ENCODE measurements at regions of chr1 and their contacts with region 1.

Region 1: DNA sequence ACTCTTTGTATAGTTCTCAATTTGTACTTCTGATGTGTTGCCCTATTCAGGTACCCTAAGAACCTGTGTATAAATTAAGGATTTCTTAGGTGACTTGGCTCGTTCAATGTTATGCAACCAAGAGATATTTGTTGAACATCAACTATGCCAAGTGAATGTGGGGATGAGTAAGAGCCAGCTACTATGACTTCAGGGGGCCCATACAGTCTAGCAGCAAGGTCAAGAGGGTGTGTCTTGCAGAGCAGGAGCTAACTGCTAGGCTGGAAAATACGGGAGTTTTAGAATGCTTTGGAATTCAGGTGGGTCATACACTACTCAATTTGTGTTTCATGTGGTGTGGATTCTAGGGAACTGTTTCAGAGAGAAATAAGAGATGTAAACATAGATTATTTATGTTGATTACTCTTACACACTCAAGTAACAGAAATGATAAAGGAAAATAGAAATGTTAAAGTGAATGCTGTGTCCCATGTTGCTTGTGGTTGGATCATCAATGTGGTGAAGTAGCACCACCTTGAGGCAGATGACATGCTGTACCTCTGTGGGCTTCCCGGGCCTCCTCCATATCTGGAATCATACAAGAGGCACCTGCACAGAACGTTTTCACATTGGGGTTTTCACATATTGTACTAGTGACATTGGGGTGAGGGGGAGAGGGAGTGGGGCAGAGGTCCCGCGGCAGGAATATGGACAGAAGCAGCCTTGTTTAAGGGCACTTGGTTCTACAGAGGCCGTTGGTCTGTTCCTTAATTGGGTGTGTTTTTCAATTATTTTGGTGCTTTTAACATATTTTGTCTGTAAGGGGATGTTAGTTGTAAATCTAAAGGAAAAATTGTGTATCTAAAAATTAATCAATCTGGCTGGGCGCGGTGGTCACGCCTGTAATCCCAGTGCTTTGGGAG is 12.4 kb downstream of the ARPC5 start:
- DNase-seq: peak; percentile 65 to 70
- H3K4me3 ChIP-seq: no peak overlapping the region
- H3K4me3 Mint-ChIP-seq: no peak overlapping the region
- H3K27ac Mint-ChIP-seq: no peak overlapping the region
- H3K4me1 ChIP-seq: peaks cover 19% of the 10 kb centered on the region
- H3K4me1 Mint-ChIP-seq: peaks cover 9% of the 10 kb centered on the region
- H3K27me3 ChIP-seq: no peaks in the 10 kb centered on the region
- H3K27me3 Mint-ChIP-seq: no peaks in the 10 kb centered on the region
- CTCF ChIP-seq: peak; percentile 71 to 78

Region 2: GRCh38 chr1:183551904-183552303 is 71.2 kb before region 1 on chr1:
- CTCF ChIA-PET with region 1: no interaction called
- POLR2A ChIA-PET with region 1: no interaction called
- intact Hi-C with region 1: loop called (anchors 2 kb)
- DNase-seq: no peak
- H3K4me3 ChIP-seq: no peak overlapping the region
- H3K4me3 Mint-ChIP-seq: no peak overlapping the region
- H3K27ac Mint-ChIP-seq: no peak overlapping the region
- H3K4me1 ChIP-seq: no peaks in the 10 kb centered on the region; the same call in 1 of the 2 replicates
- H3K4me1 Mint-ChIP-seq: peaks cover 17% of the 10 kb centered on the region
- H3K27me3 ChIP-seq: no peaks in the 10 kb centered on the region
- H3K27me3 Mint-ChIP-seq: no peaks in the 10 kb centered on the region
- CTCF ChIP-seq: no peak

Region 3: DNA sequence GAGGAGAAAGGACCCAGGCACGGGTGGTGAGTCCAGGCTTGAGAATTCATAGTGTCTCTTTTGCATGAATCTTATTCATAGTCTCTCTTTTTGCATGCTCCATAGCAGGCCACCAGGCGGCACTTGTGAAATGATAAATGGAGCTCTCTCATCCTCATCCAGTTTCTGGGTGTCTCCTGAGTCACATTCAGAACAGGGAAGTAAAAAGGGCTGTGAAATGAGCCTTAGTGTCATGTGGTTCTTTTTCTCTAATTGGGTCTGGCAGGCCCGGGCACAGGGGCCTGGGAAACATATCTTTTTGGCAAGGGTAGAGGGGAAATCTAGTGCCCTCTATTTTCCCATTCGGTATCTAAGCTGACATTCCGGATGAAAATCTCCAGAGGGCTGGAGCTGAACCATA is 13.8 kb before region 1 on chr1:
- CTCF ChIA-PET with region 1: interaction called, 5 read pairs
- POLR2A ChIA-PET with region 1: no interaction called
- intact Hi-C with region 1: loop called (anchors 1 kb)
- DNase-seq: peak; percentile 50 to 59
- H3K4me3 ChIP-seq: no peak overlapping the region
- H3K4me3 Mint-ChIP-seq: no peak overlapping the region
- H3K27ac Mint-ChIP-seq: peak overlapping the region; percentile 49
- H3K4me1 ChIP-seq: no peaks in the 10 kb centered on the region
- H3K4me1 Mint-ChIP-seq: no peaks in the 10 kb centered on the region
- H3K27me3 ChIP-seq: no peaks in the 10 kb centered on the region
- H3K27me3 Mint-ChIP-seq: no peaks in the 10 kb centered on the region
- CTCF ChIP-seq: peak; percentile 41 to 61

Region 4: GRCh38 chr1:183711741-183712361 is 88.7 kb after region 1 on chr1:
- CTCF ChIA-PET with region 1: no interaction called
- POLR2A ChIA-PET with region 1: no interaction called
- intact Hi-C with region 1: no loop called
- DNase-seq: no peak
- H3K4me3 ChIP-seq: no peak overlapping the region
- H3K4me3 Mint-ChIP-seq: no peak overlapping the region
- H3K27ac Mint-ChIP-seq: no peak overlapping the region
- H3K4me1 ChIP-seq: peaks cover 10% of the 10 kb centered on the region
- H3K4me1 Mint-ChIP-seq: peaks cover 18% of the 10 kb centered on the region
- H3K27me3 ChIP-seq: no peaks in the 10 kb centered on the region
- H3K27me3 Mint-ChIP-seq: no peaks in the 10 kb centered on the region
- CTCF ChIP-seq: no peak

Measured in Caco-2 (cell line).